GM12878 (cell line): ENCODE measurements at regions of chr11 and their contacts with region 1.

Region 1: GRCh38 chr11:58579192-58580129 is 598 bp downstream of the ZFP91 start:
- DNase-seq: no peak
- ATAC-seq: peak; percentile 52
- H3K4me3 ChIP-seq: peak overlapping the region; percentile 82
- H3K27ac ChIP-seq: peak overlapping the region; percentile 98
- H3K4me1 ChIP-seq: peaks cover 12% of the 10 kb centered on the region
- H3K27me3 ChIP-seq: no peaks in the 10 kb centered on the region
- CTCF ChIP-seq: peak; percentile 78 to 86 (median 84)
- EP300 ChIP-seq: peak in 1 of 2 experiments; percentile 55; a peak in 1 of 4 replicates
- POLR2A ChIP-seq: peak; percentile 79
- RAD21 ChIP-seq: peak; percentile 24; the same call in 1 of the 2 replicates

Region 2: GRCh38 chr11:58446294-58446693 is 133.2 kb before region 1 on chr11:
- CTCF ChIA-PET with region 1: no interaction called
- POLR2A ChIA-PET with region 1: no interaction called
- RAD21 ChIA-PET with region 1: no interaction called
- SMC1A ChIA-PET with region 1: no interaction called
- in situ Hi-C with region 1: no loop called
- intact Hi-C with region 1: no loop called
- DNase-seq: no peak
- ATAC-seq: no peak
- H3K4me3 ChIP-seq: no peak overlapping the region
- H3K27ac ChIP-seq: no peak overlapping the region
- H3K4me1 ChIP-seq: no peaks in the 10 kb centered on the region
- H3K27me3 ChIP-seq: no peaks in the 10 kb centered on the region
- CTCF ChIP-seq: no peak
- EP300 ChIP-seq: no peak
- POLR2A ChIP-seq: no peak
- RAD21 ChIP-seq: no peak

Region 3: GRCh38 chr11:58567889-58568512 is 11.5 kb before region 1 on chr11:
- CTCF ChIA-PET with region 1: interaction called, 54 read pairs
- POLR2A ChIA-PET with region 1: interaction called, 13 read pairs
- RAD21 ChIA-PET with region 1: interaction called, 27 read pairs
- SMC1A ChIA-PET with region 1: interaction called, 49 read pairs
- in situ Hi-C with region 1: no loop called
- intact Hi-C with region 1: no loop called
- DNase-seq: no peak
- ATAC-seq: peak; percentile 89
- H3K4me3 ChIP-seq: 0 out of 2 replicates have a peak overlapping the region, but pooled peaks have one; percentile 16
- H3K27ac ChIP-seq: no peak overlapping the region
- H3K4me1 ChIP-seq: peaks cover 10% of the 10 kb centered on the region
- H3K27me3 ChIP-seq: no peaks in the 10 kb centered on the region
- CTCF ChIP-seq: peak; percentile 80 to 89 (median 85)
- EP300 ChIP-seq: no peak
- POLR2A ChIP-seq: no peak
- RAD21 ChIP-seq: peak; percentile 59

Region 4: DNA sequence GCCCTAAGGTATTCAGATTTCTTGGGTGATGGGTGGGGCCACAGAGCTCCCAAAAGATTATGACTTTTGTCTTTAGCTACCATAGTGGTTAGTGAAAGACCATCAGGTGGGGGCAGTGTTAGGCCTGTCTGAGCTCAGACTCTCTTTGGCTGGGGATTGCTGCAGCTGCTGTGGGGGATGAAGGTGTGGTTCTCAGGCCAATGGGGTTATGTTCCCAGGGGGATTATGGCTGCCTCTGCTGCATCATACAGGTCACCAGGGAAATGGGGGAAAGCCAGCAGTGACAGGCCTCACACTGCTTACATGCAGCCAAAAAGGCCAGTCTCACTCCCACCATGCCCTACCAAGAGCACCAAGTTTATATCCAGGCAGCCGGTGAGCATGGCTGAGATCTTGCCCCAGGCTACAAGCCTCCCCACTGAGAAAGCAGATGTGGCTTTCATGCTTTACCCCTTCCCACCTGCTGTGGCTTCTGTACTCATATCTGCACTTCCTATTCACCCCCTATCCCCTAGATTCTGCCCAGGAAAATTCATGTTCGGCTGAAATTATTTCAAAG is 67.8 kb after region 1 on chr11:
- CTCF ChIA-PET with region 1: interaction called, 17 read pairs
- POLR2A ChIA-PET with region 1: interaction called, 6 read pairs
- RAD21 ChIA-PET with region 1: interaction called, 14 read pairs
- SMC1A ChIA-PET with region 1: interaction called, 24 read pairs
- in situ Hi-C with region 1: no loop called
- intact Hi-C with region 1: loop called (anchors 2 kb)
- DNase-seq: peak; percentile 48
- ATAC-seq: peak; percentile 93
- H3K4me3 ChIP-seq: no peak overlapping the region
- H3K27ac ChIP-seq: peak overlapping the region; percentile 40; the same call in 1 of the 2 replicates
- H3K4me1 ChIP-seq: peaks cover 10% of the 10 kb centered on the region
- H3K27me3 ChIP-seq: no peaks in the 10 kb centered on the region
- CTCF ChIP-seq: peak in 2 of 3 experiments; percentile 21 to 40; a peak in 3 of 6 replicates
- EP300 ChIP-seq: peak; percentile 66 to 72; a peak in 2 of 4 replicates
- POLR2A ChIP-seq: no peak
- RAD21 ChIP-seq: peak; percentile 57; the same call in 1 of the 2 replicates

Region 5: DNA sequence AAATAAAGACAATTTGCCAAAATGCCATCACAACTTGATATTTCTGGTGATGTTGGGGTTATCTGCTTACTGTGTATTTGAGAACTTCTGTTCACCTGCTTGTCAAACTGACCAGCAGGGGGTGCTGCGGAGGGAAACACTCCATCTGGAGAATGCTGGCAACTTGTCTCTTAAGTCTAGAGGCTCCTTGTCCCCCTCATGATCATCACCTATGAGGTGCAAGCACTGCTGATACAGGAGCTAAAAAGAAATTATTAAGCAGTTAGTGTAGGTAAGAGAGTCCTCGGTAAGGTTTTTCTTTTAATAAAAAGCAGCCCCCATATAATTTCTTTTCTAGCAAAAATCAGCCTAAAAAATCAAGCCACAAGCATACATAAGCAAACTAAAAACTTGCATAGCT is 473.9 kb after region 1 on chr11:
- CTCF ChIA-PET with region 1: interaction called, 10 read pairs
- POLR2A ChIA-PET with region 1: no interaction called
- RAD21 ChIA-PET with region 1: interaction called, 3 read pairs
- SMC1A ChIA-PET with region 1: interaction called, 3 read pairs
- in situ Hi-C with region 1: no loop called
- intact Hi-C with region 1: no loop called
- DNase-seq: no peak
- ATAC-seq: peak; percentile 84
- H3K4me3 ChIP-seq: no peak overlapping the region
- H3K27ac ChIP-seq: no peak overlapping the region
- H3K4me1 ChIP-seq: peaks cover 4% of the 10 kb centered on the region; the same call in 1 of the 2 replicates
- H3K27me3 ChIP-seq: no peaks in the 10 kb centered on the region
- CTCF ChIP-seq: peak; percentile 47 to 75 (median 63)
- EP300 ChIP-seq: no peak
- POLR2A ChIP-seq: no peak
- RAD21 ChIP-seq: peak; percentile 44; the same call in 1 of the 2 replicates

Region 6: DNA sequence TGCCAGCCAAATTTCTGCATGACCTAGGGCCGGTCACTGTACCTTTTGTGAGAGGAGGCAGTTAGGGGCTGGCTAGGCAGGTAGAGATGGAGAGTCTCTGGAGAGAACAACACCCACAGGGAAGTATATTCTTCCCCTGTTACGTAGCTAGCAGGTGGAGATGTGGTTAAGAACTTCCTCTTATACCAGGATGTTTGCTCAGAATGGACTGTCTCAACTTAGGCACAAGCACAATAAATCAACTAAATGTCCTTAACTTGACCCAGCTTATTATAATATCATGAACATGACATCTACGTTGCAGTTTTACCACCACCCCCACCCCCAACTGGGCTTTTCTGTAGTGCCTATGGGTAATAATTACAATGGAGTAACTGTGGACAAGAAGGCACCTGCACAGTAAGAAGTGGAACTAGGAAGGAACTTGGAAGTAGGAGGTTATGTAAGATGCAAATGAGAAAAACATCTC is 693.9 kb after region 1 on chr11:
- CTCF ChIA-PET with region 1: no interaction called
- POLR2A ChIA-PET with region 1: no interaction called
- RAD21 ChIA-PET with region 1: no interaction called
- SMC1A ChIA-PET with region 1: no interaction called
- in situ Hi-C with region 1: no loop called
- intact Hi-C with region 1: loop called (anchors 5 kb)
- DNase-seq: peak; percentile 79
- ATAC-seq: peak; percentile 93
- H3K4me3 ChIP-seq: no peak overlapping the region
- H3K27ac ChIP-seq: peak overlapping the region; percentile 77
- H3K4me1 ChIP-seq: peaks cover 35% of the 10 kb centered on the region
- H3K27me3 ChIP-seq: no peaks in the 10 kb centered on the region
- CTCF ChIP-seq: no peak
- EP300 ChIP-seq: peak; percentile 88 to 96
- POLR2A ChIP-seq: no peak
- RAD21 ChIP-seq: no peak